GM12878 (cell line): ENCODE measurements at regions of chr15 and their contacts with region 1.

Region 1: GRCh38 chr15:81296673-81297072 is 27.3 kb downstream of the STARD5 start:
- DNase-seq: peak; percentile 95
- ATAC-seq: peak; percentile 44
- H3K4me3 ChIP-seq: peak overlapping the region; percentile 75
- H3K27ac ChIP-seq: peak overlapping the region; percentile 99
- H3K4me1 ChIP-seq: peaks cover 60% of the 10 kb centered on the region
- H3K27me3 ChIP-seq: no peaks in the 10 kb centered on the region
- CTCF ChIP-seq: no peak
- EP300 ChIP-seq: peak; percentile 78 to 90; a peak in 3 of 4 replicates
- POLR2A ChIP-seq: peak; percentile 79
- RAD21 ChIP-seq: peak; percentile 19; the same call in 1 of the 2 replicates

Region 2: GRCh38 chr15:80989518-80990478 is 306.9 kb before region 1 on chr15 and contains the start of gene MESD:
- CTCF ChIA-PET with region 1: no interaction called
- POLR2A ChIA-PET with region 1: no interaction called
- RAD21 ChIA-PET with region 1: no interaction called
- SMC1A ChIA-PET with region 1: no interaction called
- in situ Hi-C with region 1: loop called (anchors 10 kb)
- intact Hi-C with region 1: no loop called
- DNase-seq: peak; percentile 70
- ATAC-seq: peak; percentile 97
- H3K4me3 ChIP-seq: peak within 1 kb of the TSS; percentile 94
- H3K27ac ChIP-seq: peak within 1 kb of the TSS; percentile 80
- H3K4me1 ChIP-seq: peaks cover 4% of the 10 kb centered on the region
- H3K27me3 ChIP-seq: no peaks in the 10 kb centered on the region
- CTCF ChIP-seq: no peak
- EP300 ChIP-seq: no peak
- POLR2A ChIP-seq: peak; percentile 99
- RAD21 ChIP-seq: no peak
- polyA plus RNA-seq, gene MESD: 10.2 to 16.7 TPM

Region 3: DNA sequence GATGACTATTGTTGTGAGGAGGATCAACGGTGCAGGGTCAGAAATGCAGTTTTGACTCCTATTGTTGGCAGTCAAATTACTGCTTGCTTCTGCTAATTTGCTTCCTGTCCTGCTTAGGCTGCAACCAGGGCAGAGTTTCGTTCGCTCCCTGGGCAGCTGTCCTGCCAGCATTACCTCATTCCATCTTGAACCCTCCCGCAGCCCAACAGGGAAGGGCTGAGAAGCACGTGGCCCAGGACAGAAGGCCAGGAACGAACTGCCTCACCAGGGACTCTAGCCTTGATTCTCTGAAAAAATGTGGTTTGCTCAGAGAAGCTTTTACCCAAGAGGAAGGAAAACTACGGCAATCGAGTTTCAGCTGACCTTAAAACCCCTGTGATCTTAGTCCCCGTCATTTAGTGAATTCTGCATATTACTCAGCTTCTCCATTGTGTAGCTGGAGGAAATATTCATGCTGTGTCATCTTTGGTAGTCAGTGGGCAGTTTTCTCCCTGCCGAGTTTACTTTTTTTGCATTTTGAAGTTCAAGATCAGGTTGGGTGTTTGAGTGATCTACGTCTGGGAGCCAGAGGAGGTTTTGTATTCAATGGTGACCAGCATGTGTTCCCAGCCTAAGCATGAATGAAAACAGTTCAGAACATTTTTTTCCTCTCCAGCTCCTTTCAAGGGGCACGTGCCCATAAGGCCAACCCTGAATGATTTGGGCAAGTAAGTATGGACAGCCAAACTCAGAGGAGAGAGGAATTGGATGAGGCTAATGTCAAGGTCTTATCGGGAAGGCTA is 273.0 kb before region 1 on chr15:
- CTCF ChIA-PET with region 1: no interaction called
- POLR2A ChIA-PET with region 1: no interaction called
- RAD21 ChIA-PET with region 1: interaction called, 3 read pairs
- SMC1A ChIA-PET with region 1: interaction called, 4 read pairs
- in situ Hi-C with region 1: no loop called
- intact Hi-C with region 1: loop called (anchors 5 kb)
- DNase-seq: peak; percentile 97
- ATAC-seq: peak; percentile 92
- H3K4me3 ChIP-seq: peak overlapping the region; percentile 22; the same call in 1 of the 2 replicates
- H3K27ac ChIP-seq: peak overlapping the region; percentile 91
- H3K4me1 ChIP-seq: peaks cover 41% of the 10 kb centered on the region
- H3K27me3 ChIP-seq: no peaks in the 10 kb centered on the region
- CTCF ChIP-seq: no peak
- EP300 ChIP-seq: peak; percentile 96 to 100
- POLR2A ChIP-seq: peak; percentile 59
- RAD21 ChIP-seq: no peak

Region 4: GRCh38 chr15:81221449-81221848 is 75.2 kb before region 1 on chr15:
- CTCF ChIA-PET with region 1: no interaction called
- POLR2A ChIA-PET with region 1: no interaction called
- RAD21 ChIA-PET with region 1: no interaction called
- SMC1A ChIA-PET with region 1: no interaction called
- in situ Hi-C with region 1: no loop called
- intact Hi-C with region 1: no loop called
- DNase-seq: no peak
- ATAC-seq: no peak
- H3K4me3 ChIP-seq: no peak overlapping the region
- H3K27ac ChIP-seq: no peak overlapping the region
- H3K4me1 ChIP-seq: no peaks in the 10 kb centered on the region
- H3K27me3 ChIP-seq: no peaks in the 10 kb centered on the region; a peak in 1 of 4 replicates
- CTCF ChIP-seq: no peak
- EP300 ChIP-seq: no peak
- POLR2A ChIP-seq: no peak
- RAD21 ChIP-seq: no peak

Region 5: GRCh38 chr15:81311752-81312464 is 15.2 kb after region 1 on chr15:
- CTCF ChIA-PET with region 1: interaction called, 15 read pairs
- POLR2A ChIA-PET with region 1: interaction called, 23 read pairs
- RAD21 ChIA-PET with region 1: interaction called, 31 read pairs
- SMC1A ChIA-PET with region 1: interaction called, 55 read pairs
- in situ Hi-C with region 1: no loop called
- intact Hi-C with region 1: no loop called
- DNase-seq: no peak
- ATAC-seq: peak; percentile 74
- H3K4me3 ChIP-seq: no peak overlapping the region
- H3K27ac ChIP-seq: peak overlapping the region; percentile 61
- H3K4me1 ChIP-seq: peaks cover 36% of the 10 kb centered on the region
- H3K27me3 ChIP-seq: no peaks in the 10 kb centered on the region
- CTCF ChIP-seq: no peak
- EP300 ChIP-seq: no peak
- POLR2A ChIP-seq: no peak
- RAD21 ChIP-seq: no peak

Region 6: GRCh38 chr15:81323944-81324881 is 27.5 kb after region 1 on chr15 and contains the start of gene STARD5:
- CTCF ChIA-PET with region 1: interaction called, 5 read pairs
- POLR2A ChIA-PET with region 1: interaction called, 25 read pairs
- RAD21 ChIA-PET with region 1: interaction called, 14 read pairs
- SMC1A ChIA-PET with region 1: interaction called, 21 read pairs
- in situ Hi-C with region 1: no loop called
- intact Hi-C with region 1: loop called (anchors 1 kb)
- DNase-seq: peak; percentile 69
- ATAC-seq: peak; percentile 100
- H3K4me3 ChIP-seq: peak within 1 kb of the TSS; percentile 89
- H3K27ac ChIP-seq: peak within 1 kb of the TSS; percentile 32
- H3K4me1 ChIP-seq: peaks cover 8% of the 10 kb centered on the region
- H3K27me3 ChIP-seq: no peaks in the 10 kb centered on the region
- CTCF ChIP-seq: no peak
- EP300 ChIP-seq: no peak
- POLR2A ChIP-seq: peak; percentile 95
- RAD21 ChIP-seq: no peak
- polyA plus RNA-seq, gene STARD5: 2.3 to 3.5 TPM

Region 7: GRCh38 chr15:82046666-82047452 is 750.2 kb after region 1 on chr15:
- CTCF ChIA-PET with region 1: no interaction called
- POLR2A ChIA-PET with region 1: no interaction called
- RAD21 ChIA-PET with region 1: no interaction called
- SMC1A ChIA-PET with region 1: interaction called, 3 read pairs
- in situ Hi-C with region 1: no loop called
- intact Hi-C with region 1: loop called (anchors 10 kb)
- DNase-seq: no peak
- ATAC-seq: peak; percentile 77
- H3K4me3 ChIP-seq: peak overlapping the region; percentile 71
- H3K27ac ChIP-seq: peak overlapping the region; percentile 18; the same call in 1 of the 2 replicates
- H3K4me1 ChIP-seq: no peaks in the 10 kb centered on the region; the same call in 1 of the 2 replicates
- H3K27me3 ChIP-seq: peaks cover 4 to 8% of the 10 kb centered on the region in 2 experiments; a peak in 3 of 4 replicates
- CTCF ChIP-seq: peak; percentile 34 to 58 (median 51); a peak in 5 of 6 replicates
- EP300 ChIP-seq: no peak
- POLR2A ChIP-seq: no peak
- RAD21 ChIP-seq: peak; percentile 36; the same call in 1 of the 2 replicates

Region 8: DNA sequence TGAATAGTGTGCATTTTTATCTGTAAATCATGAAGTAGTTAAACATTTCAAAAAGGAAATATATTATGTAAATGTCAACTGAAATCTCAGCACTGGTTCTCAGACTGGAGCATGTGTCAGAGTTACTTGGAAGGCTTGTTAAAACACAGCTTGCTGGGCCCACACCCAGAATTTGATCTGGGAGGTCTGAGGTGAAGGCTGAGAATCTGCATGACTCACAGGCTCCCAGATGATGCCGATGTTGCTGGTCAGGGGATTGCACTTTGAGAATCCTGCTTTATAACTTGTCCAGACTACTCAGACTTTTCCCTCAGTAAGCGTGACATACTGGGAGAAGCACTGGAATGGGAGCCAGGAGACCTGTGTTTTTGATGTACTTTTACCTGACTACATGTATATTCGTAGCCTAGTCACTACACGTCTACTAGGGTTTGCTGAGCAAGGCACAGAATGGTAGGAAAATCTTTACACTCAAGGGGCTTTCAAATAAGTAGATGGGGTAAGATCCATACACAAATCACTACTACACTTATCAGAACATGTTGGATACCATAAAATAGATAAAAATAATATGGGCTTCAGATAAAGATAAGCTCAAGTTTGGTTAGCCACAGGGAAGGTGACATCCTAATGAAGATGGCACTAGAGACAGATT is 826.2 kb after region 1 on chr15:
- CTCF ChIA-PET with region 1: no interaction called
- POLR2A ChIA-PET with region 1: no interaction called
- RAD21 ChIA-PET with region 1: no interaction called
- SMC1A ChIA-PET with region 1: no interaction called
- in situ Hi-C with region 1: no loop called
- intact Hi-C with region 1: no loop called
- DNase-seq: no peak
- ATAC-seq: no peak
- H3K4me3 ChIP-seq: no peak overlapping the region
- H3K27ac ChIP-seq: no peak overlapping the region
- H3K4me1 ChIP-seq: no peaks in the 10 kb centered on the region
- H3K27me3 ChIP-seq: no peaks in the 10 kb centered on the region
- CTCF ChIP-seq: no peak
- EP300 ChIP-seq: no peak
- POLR2A ChIP-seq: no peak
- RAD21 ChIP-seq: no peak

Region 9: GRCh38 chr15:82832601-82833361 is 1536.1 kb after region 1 on chr15:
- CTCF ChIA-PET with region 1: no interaction called
- POLR2A ChIA-PET with region 1: no interaction called
- RAD21 ChIA-PET with region 1: no interaction called
- SMC1A ChIA-PET with region 1: no interaction called
- in situ Hi-C with region 1: loop called (anchors 10 kb)
- intact Hi-C with region 1: no loop called
- DNase-seq: peak; percentile 53
- ATAC-seq: peak; percentile 90
- H3K4me3 ChIP-seq: 0 out of 2 replicates have a peak overlapping the region, but pooled peaks have one; percentile 28
- H3K27ac ChIP-seq: peak overlapping the region; percentile 30
- H3K4me1 ChIP-seq: peaks cover 18% of the 10 kb centered on the region
- H3K27me3 ChIP-seq: no peaks in the 10 kb centered on the region
- CTCF ChIP-seq: no peak
- EP300 ChIP-seq: peak in 1 of 2 experiments; percentile 65; a peak in 2 of 4 replicates
- POLR2A ChIP-seq: no peak
- RAD21 ChIP-seq: no peak